MCF 10A (cell line): ENCODE measurements at regions of chrX and their contacts with region 1.

Region 1: GRCh38 chrX:47540754-47541538 is 20.1 kb upstream of the ARAF start:
- DNase-seq: peak; percentile 84
- H3K4me3 Mint-ChIP-seq: no peak overlapping the region
- H3K27ac Mint-ChIP-seq: peak overlapping the region; percentile 23
- H3K4me1 Mint-ChIP-seq: no peaks in the 10 kb centered on the region
- H3K27me3 Mint-ChIP-seq: no peaks in the 10 kb centered on the region
- CTCF ChIP-seq: peak; percentile 47

Region 2: GRCh38 chrX:47581731-47582647 is 41.0 kb after region 1 on chrX and contains the start of gene TIMP1:
- CTCF ChIA-PET with region 1: no interaction called
- POLR2A ChIA-PET with region 1: no interaction called
- intact Hi-C with region 1: loop called (anchors 1 kb)
- DNase-seq: peak; percentile 93
- H3K4me3 Mint-ChIP-seq: peak within 1 kb of the TSS; percentile 76
- H3K27ac Mint-ChIP-seq: peak within 1 kb of the TSS; percentile 74
- H3K4me1 Mint-ChIP-seq: peaks cover 24% of the 10 kb centered on the region
- H3K27me3 Mint-ChIP-seq: no peaks in the 10 kb centered on the region
- CTCF ChIP-seq: no peak
- total RNA-seq, gene TIMP1: 647 and 720 TPM in 2 replicates

Region 3: GRCh38 chrX:47644557-47645091 is 103.7 kb after region 1 on chrX:
- CTCF ChIA-PET with region 1: interaction called, 23 read pairs
- POLR2A ChIA-PET with region 1: interaction called, 5 read pairs
- intact Hi-C with region 1: loop called (anchors 1 kb)
- DNase-seq: peak; percentile 23
- H3K4me3 Mint-ChIP-seq: no peak overlapping the region
- H3K27ac Mint-ChIP-seq: no peak overlapping the region
- H3K4me1 Mint-ChIP-seq: peaks cover 11% of the 10 kb centered on the region
- H3K27me3 Mint-ChIP-seq: no peaks in the 10 kb centered on the region
- CTCF ChIP-seq: peak; percentile 34

Region 4: GRCh38 chrX:47751670-47752069 is 210.7 kb after region 1 on chrX:
- CTCF ChIA-PET with region 1: interaction called, 19 read pairs
- POLR2A ChIA-PET with region 1: interaction called, 4 read pairs
- intact Hi-C with region 1: loop called (anchors 1 kb)
- DNase-seq: peak; percentile 45
- H3K4me3 Mint-ChIP-seq: no peak overlapping the region
- H3K27ac Mint-ChIP-seq: no peak overlapping the region
- H3K4me1 Mint-ChIP-seq: no peaks in the 10 kb centered on the region
- H3K27me3 Mint-ChIP-seq: no peaks in the 10 kb centered on the region
- CTCF ChIP-seq: peak; percentile 51

Region 5: GRCh38 chrX:47836164-47837072 is 295.5 kb after region 1 on chrX and contains the start of gene ZNF81:
- CTCF ChIA-PET with region 1: interaction called, 4 read pairs
- POLR2A ChIA-PET with region 1: interaction called, 3 read pairs
- intact Hi-C with region 1: loop called (anchors 2 kb)
- DNase-seq: peak; percentile 95
- H3K4me3 Mint-ChIP-seq: peak within 1 kb of the TSS; percentile 100
- H3K27ac Mint-ChIP-seq: peak within 1 kb of the TSS; percentile 97
- H3K4me1 Mint-ChIP-seq: peaks cover 5% of the 10 kb centered on the region
- H3K27me3 Mint-ChIP-seq: no peaks in the 10 kb centered on the region
- CTCF ChIP-seq: no peak
- total RNA-seq, gene ZNF81: 7.5 and 7.8 TPM in 2 replicates